Activated T-helper 1 cell treated with anti-CD3 and anti-CD28 coated beads, Interleukin-12 subunit alpha, Interleukin-12 subunit beta, Interleukin-2, Interleukin-4 antibody, amounts not matched to agents 30 ng/mL and 10 ng/mL and 1 ng/mL, durations not matched to agents 14 hours and 24 hours and 36 hours (primary cell): ENCODE measurements at regions of chr22 and their contacts with region 1.

Region 1: GRCh38 chr22:24433813-24434470 is 6.5 kb downstream of the ADORA2A start:
- DNase-seq: no peak
- H3K4me3 Mint-ChIP-seq: peak overlapping the region; percentile 76
- H3K27ac Mint-ChIP-seq: peak overlapping the region; percentile 100
- H3K4me1 Mint-ChIP-seq: peaks cover 81% of the 10 kb centered on the region
- H3K27me3 Mint-ChIP-seq: peaks cover 3% of the 10 kb centered on the region

Region 2: DNA sequence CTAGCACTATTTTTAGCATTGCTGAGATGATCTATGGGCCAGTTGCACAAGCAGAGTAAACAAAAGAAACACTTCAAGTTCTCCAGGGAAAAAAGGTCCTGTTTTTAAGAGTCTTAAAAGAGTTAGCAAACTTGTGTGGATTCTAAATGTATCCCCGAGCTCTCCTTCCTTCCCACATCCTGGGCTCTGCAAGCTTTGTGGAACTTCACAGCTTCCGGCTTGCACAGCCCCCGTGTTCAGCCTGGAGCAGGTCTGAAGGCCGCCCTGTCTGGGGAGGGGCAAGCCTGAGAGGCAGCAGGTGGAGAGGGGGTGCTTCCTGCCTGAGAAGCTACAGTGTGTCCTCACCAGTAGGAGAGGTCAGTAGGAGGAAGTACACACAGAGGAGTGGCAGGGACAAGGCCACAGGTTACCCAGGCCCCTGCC is 287.7 kb before region 1 on chr22:
- intact Hi-C with region 1: no loop called
- DNase-seq: no peak
- H3K4me3 Mint-ChIP-seq: no peak overlapping the region
- H3K27ac Mint-ChIP-seq: peak overlapping the region; percentile 61
- H3K4me1 Mint-ChIP-seq: peaks cover 47% of the 10 kb centered on the region
- H3K27me3 Mint-ChIP-seq: no peaks in the 10 kb centered on the region

Region 3: DNA sequence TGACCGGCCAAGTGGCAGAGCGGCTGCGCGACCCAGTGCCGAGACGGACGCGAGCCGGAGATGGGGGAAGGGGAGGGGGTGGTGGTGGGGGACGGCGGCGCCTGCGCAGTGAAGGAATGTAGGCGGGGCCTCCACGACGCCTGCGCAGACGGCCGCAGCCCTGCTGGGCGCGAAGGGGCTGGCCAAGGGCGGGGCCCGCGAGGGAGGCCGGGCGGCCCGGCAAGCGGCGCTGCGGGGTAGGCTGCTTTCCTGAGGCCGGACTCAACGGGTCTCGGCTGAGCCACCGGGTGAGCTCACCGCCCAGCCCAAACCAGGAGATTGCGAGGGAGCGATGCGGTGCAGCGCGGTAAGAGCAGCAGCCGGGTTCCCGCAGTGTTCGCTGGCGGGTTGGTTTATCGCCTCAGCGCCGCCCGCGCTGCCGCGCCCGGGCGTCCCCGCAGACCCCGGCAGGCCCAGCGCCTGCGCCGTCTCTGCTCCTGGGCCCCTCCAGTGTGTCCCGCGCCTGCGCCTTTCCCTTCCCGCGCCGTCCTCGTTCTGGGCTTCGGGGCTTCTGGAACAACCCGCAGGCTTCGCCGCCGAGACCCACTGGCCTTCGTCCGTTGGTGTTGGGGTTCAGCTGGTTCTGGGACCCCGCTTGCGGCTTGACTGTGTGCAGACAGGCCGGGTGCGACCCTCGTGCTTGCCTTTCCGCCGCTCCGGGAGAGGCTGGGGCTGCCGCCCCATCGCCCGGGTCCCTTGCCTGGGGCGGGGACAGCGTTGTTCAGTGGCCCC is 163.1 kb before region 1 on chr22 and contains the start of gene SPECC1L:
- intact Hi-C with region 1: loop called (anchors 2 kb)
- DNase-seq: peak; percentile 92
- H3K4me3 Mint-ChIP-seq: peak within 1 kb of the TSS; percentile 85
- H3K27ac Mint-ChIP-seq: peak within 1 kb of the TSS; percentile 82
- H3K4me1 Mint-ChIP-seq: peaks cover 35% of the 10 kb centered on the region
- H3K27me3 Mint-ChIP-seq: no peaks in the 10 kb centered on the region
- total RNA-seq, gene SPECC1L: 40.3 and 40.4 TPM in 2 replicates

Region 4: GRCh38 chr22:24325105-24325757 is 108.7 kb before region 1 on chr22:
- intact Hi-C with region 1: loop called (anchors 1 kb)
- DNase-seq: peak; percentile 22
- H3K4me3 Mint-ChIP-seq: no peak overlapping the region
- H3K27ac Mint-ChIP-seq: peak overlapping the region; percentile 1
- H3K4me1 Mint-ChIP-seq: peaks cover 45% of the 10 kb centered on the region
- H3K27me3 Mint-ChIP-seq: no peaks in the 10 kb centered on the region

Region 5: DNA sequence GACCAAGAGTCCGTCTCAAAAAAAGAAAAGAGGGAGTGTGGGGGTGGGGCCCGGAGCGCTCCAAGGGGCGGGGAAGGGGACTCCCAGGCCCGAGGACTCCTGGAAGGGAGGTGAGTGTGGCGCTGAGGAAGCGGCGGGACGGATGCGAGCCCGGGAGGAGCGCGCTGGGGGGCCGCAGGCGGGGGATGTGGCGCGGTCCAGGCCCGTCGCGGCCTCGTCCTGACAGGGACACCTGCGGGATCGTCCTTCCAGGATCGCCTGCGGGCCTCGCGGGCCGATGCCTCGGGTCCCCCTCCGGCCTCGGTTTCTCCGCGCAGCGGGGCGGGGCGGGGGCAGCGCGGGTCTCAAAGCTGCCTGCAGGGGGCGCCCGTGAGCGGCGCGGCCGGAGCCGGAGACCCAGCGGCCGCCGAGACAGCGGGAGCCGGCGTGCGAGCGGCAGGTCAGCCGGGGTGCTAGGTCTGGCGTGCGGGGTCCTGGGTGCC is 10.4 kb before region 1 on chr22:
- intact Hi-C with region 1: loop called (anchors 1 kb)
- DNase-seq: peak; percentile 64
- H3K4me3 Mint-ChIP-seq: peak overlapping the region; percentile 80
- H3K27ac Mint-ChIP-seq: no peak overlapping the region
- H3K4me1 Mint-ChIP-seq: peaks cover 31% of the 10 kb centered on the region
- H3K27me3 Mint-ChIP-seq: peaks cover 5% of the 10 kb centered on the region

Region 6: DNA sequence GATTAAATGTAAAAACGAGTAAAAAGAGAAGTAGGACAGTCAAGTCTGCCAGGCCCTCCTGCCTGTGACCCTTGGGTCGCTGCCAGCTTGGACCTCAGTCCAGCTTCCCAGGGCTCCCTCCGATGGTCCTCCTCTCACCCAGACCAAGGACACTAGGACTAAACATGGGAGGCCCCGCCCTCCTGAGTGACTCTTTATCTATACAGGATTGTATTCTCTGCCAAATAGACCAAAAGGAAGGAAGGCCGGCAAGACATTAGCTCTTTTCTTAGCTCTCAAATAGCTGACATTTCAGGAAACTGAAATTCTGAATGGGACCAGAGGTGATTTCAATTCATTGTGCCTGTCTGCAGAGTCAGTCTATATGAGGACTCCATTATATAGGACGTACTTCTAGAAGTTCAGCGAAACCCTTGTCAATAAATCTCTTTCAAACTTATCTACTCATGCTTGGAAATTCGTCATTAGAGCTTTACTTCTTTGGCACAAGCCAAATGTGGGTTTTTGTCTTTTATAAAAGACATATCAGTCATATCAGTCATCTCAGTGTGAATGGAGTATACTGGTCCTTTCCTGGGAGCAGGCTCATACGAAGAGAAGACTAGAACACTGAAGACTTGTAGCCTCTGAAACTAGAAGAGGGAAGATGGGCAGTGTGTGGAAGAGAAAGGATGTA is 21.9 kb after region 1 on chr22:
- intact Hi-C with region 1: no loop called
- DNase-seq: no peak
- H3K4me3 Mint-ChIP-seq: no peak overlapping the region
- H3K27ac Mint-ChIP-seq: no peak overlapping the region
- H3K4me1 Mint-ChIP-seq: peaks cover 18% of the 10 kb centered on the region
- H3K27me3 Mint-ChIP-seq: no peaks in the 10 kb centered on the region

Region 7: DNA sequence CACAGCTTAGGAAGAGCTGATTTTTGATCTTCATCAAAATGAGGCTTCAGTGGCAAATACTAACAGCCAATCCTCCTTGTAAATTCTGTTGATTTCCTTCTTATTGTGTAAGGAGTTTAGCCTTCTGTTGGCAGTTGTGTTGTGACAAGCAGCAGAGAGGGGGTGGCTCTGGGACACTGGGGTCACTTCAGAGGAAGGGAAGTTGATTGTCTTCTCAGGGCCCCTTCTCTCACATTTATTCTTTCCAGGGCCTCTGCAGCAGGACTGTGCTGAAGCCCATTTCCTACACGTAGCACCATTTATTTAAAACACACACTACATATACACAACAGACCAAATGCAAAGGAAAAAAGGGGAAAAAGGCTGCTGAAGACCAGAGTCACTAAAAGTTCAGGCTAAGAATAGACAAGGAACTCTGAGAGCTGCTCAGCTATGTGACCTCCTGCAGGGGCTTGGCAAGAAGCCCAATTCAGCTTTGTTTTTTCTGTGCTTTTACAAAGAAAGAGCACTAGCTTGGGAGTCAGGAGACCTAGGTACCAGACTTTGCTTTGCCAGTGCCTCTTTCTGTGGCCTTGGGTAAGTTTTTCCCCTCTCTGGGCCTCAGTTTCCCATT is 32.9 kb after region 1 on chr22:
- intact Hi-C with region 1: loop called (anchors 5 kb)
- DNase-seq: no peak
- H3K4me3 Mint-ChIP-seq: no peak overlapping the region
- H3K27ac Mint-ChIP-seq: no peak overlapping the region
- H3K4me1 Mint-ChIP-seq: peaks cover 6% of the 10 kb centered on the region
- H3K27me3 Mint-ChIP-seq: peaks cover 2% of the 10 kb centered on the region

Region 8: GRCh38 chr22:24510637-24511625 is 77.0 kb after region 1 on chr22:
- intact Hi-C with region 1: loop called (anchors 2 kb)
- DNase-seq: no peak
- H3K4me3 Mint-ChIP-seq: peak overlapping the region; percentile 1
- H3K27ac Mint-ChIP-seq: peak overlapping the region; percentile 32
- H3K4me1 Mint-ChIP-seq: peaks cover 41% of the 10 kb centered on the region
- H3K27me3 Mint-ChIP-seq: peaks cover 3% of the 10 kb centered on the region